Naive thymus-derived CD4-positive, alpha-beta T cell (primary cell): ENCODE measurements at regions of chr12 and their contacts with region 1.

Region 1: DNA sequence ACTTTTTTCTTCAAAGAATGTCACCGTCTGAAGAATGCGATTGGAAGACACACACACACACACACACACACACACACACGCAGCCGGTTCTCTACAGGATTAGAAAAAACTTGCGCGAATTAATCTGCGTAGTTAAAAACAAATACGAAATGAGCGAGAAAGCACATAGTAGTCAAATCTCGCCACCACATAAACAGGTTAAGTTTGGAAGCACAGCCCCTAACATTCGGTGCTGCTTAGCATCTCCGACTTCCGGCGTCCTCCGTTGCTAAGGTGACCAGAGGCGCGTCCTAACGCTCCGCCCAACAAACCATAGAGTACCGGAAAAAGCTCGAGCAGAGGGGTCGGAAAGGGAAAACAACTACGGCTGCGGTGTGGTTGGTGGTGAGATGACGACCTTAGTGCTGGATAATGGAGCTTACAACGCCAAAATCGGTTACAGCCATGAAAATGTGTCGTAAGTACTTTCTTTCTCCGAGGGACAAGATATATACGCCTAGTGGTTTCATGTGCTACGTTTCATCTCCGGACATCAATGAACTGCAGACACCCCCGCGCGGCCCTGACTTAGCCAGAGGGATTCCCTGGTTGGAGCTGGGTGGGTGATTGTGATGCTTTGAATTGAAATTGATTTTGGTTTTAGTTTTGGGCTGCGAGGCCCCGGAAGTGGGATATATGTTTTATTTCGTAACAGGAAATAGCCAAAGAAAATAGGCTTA is at the start of gene ACTR6:
- DNase-seq: peak; percentile 91 to 99 (median 97)
- ATAC-seq: peak; percentile 93
- H3K4me3 ChIP-seq: peak within 1 kb of the TSS; percentile 84
- H3K4me3 Mint-ChIP-seq: peak within 1 kb of the TSS; percentile 95 to 99 (median 98)
- H3K27ac ChIP-seq: peak within 1 kb of the TSS; percentile 95
- H3K27ac Mint-ChIP-seq: peak within 1 kb of the TSS; percentile 98 to 100 (median 99)
- H3K4me1 ChIP-seq: peaks cover 10 to 27% of the 10 kb centered on the region in 2 donors
- H3K4me1 Mint-ChIP-seq: peaks cover 17 to 56% (median 44%) of the 10 kb centered on the region in 7 donors
- H3K27me3 ChIP-seq: no peaks in the 10 kb centered on the region
- H3K27me3 Mint-ChIP-seq: no peaks in the 10 kb centered on the region
- total RNA-seq, gene ACTR6: 24.1 to 46.8 (median 34.6) TPM

Region 2: DNA sequence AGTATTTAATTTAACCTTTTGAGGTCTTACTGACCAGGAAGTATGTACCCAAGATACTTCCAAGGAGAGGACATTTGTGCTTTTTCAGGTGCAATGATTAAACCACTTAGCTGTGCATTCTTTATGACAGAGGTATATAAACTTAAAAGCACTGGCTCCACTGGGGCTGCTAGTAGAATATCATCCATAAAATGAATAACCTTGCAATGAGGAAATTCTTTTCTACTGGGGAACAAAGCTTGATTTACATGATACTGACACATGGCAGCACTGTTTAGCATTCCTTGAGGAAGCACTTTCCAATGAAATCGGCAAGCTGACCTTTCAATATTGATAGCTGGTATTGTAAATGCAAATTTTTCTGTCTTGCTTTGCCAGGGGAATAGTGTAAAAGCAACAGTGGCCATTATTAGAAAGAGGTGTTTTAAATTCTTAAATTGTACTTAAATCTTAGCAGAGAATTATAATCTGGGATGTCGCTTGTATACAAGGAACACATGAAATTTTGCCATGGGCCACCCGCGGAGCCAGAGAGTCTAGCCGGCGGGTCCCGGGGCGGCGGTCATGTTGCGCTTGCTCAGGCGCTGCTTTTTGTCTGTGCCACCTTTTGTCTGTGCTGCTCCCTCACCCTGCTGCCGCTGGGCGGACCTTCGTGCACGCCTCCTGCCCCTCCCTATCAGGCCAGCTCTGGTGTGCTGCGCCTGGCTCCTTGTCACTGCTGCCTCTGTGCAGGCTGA is 37.0 kb before region 1 on chr12:
- CTCF ChIA-PET with region 1: interaction called, 3 read pairs
- POLR2A ChIA-PET with region 1: interaction called, 6 read pairs
- intact Hi-C with region 1: loop called (anchors 1 kb)
- DNase-seq: peak; percentile 46 to 67 (median 61)
- ATAC-seq: peak; percentile 99
- H3K4me3 ChIP-seq: peak overlapping the region; percentile 34
- H3K4me3 Mint-ChIP-seq: peak overlapping the region; percentile 58 to 80 (median 72)
- H3K27ac ChIP-seq: no peak overlapping the region
- H3K27ac Mint-ChIP-seq: peak overlapping the region in 7 of 9 donors; percentile 18 to 64 (median 53)
- H3K4me1 ChIP-seq: peaks cover 0 to 7% of the 10 kb centered on the region in 2 donors
- H3K4me1 Mint-ChIP-seq: peaks cover 0 to 14% (median 11%) of the 10 kb centered on the region in 7 donors
- H3K27me3 ChIP-seq: no peaks in the 10 kb centered on the region
- H3K27me3 Mint-ChIP-seq: no peaks in the 10 kb centered on the region

Region 3: GRCh38 chr12:100185361-100185894 is 15.2 kb before region 1 on chr12:
- CTCF ChIA-PET with region 1: interaction called, 3 read pairs
- POLR2A ChIA-PET with region 1: interaction called, 6 read pairs
- intact Hi-C with region 1: loop called in 1 of 2 experiments (anchors 1 kb)
- DNase-seq: peak in 1 of 9 donors; percentile 32
- ATAC-seq: peak; percentile 36
- H3K4me3 ChIP-seq: no peak overlapping the region
- H3K4me3 Mint-ChIP-seq: no peak overlapping the region
- H3K27ac ChIP-seq: no peak overlapping the region
- H3K27ac Mint-ChIP-seq: peak overlapping the region in 1 of 9 donors; percentile 36
- H3K4me1 ChIP-seq: no peaks in the 10 kb centered on the region
- H3K4me1 Mint-ChIP-seq: peaks cover 0 to 31% (median 3%) of the 10 kb centered on the region in 7 donors
- H3K27me3 ChIP-seq: no peaks in the 10 kb centered on the region
- H3K27me3 Mint-ChIP-seq: no peaks in the 10 kb centered on the region